Calu3 (cell line): ENCODE measurements at regions of chr2 and their contacts with region 1.

Region 1: DNA sequence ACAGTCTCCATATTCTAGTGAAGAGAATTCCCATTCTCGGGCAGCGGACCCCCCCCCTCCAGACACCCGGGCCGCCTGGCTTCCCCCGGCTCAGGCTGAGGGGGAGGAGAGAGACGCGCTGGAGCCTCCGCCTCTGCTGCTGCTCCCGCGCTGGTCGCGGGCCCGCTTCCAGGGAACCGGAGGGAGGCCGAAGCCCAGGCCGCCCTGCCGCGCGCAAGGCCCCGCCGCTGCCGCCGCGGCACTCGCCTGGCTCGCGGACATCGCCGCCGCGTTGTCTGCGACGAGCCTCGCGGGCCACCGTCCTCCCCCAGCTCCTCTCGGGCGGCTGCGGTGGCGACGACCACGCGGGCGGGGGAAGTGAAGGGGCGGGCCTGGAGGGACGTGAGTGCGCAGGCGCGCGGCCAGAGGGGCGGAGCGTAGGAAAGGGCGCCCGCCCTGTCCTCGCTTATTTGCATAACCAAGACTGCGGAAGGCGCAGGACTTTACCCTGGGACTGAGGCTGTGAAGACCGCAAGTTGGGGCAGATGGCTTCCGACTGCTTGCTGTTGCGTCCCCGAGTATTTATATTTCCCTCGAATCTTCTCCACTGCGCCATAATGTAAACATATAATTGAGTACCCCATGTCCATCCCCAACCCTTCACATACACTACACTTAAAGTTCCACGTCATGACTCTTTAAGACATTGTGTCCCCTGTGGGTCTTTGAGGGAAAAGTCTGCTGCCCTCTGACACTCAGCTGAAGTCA is at the start of gene ARL5A:
- DNase-seq: peak; percentile 96
- H3K4me3 Mint-ChIP-seq: peak within 1 kb of the TSS; percentile 97
- H3K27ac Mint-ChIP-seq: peak within 1 kb of the TSS; percentile 98
- H3K4me1 Mint-ChIP-seq: peaks cover 36% of the 10 kb centered on the region
- H3K27me3 Mint-ChIP-seq: no peaks in the 10 kb centered on the region
- CTCF ChIP-seq: no peak
- total RNA-seq, gene ARL5A: 45.0 and 53.7 TPM in 2 replicates

Region 2: DNA sequence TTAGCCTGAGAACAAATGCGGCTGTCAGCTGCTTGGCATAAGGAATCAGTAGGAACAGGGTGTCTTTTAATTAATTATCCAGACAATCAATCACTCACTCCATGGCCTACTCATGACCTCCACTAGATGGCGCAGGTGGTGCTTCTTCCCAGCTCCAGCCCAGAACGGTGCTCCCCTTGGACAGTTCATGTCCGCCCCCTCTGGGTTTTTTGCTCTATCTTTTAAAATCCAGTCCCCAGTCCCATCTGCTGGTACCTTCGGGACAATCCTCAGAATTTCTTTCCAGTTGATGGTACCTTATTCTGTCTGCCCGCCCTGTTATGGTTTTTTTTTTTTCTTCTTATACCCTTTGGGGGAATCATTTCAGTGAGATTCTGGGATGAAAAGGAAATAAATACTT is 170.7 kb after region 1 on chr2:
- CTCF ChIA-PET with region 1: no interaction called
- intact Hi-C with region 1: loop called (anchors 5 kb)
- DNase-seq: peak; percentile 71
- H3K4me3 Mint-ChIP-seq: no peak overlapping the region
- H3K27ac Mint-ChIP-seq: no peak overlapping the region
- H3K4me1 Mint-ChIP-seq: peaks cover under 1% of the 10 kb centered on the region
- H3K27me3 Mint-ChIP-seq: peaks cover 18% of the 10 kb centered on the region
- CTCF ChIP-seq: peak; percentile 85